ENCODE measurements at regions of chr5 and their contacts with region 1.

Region 1: GRCh38 chr5:41636605-41637004 is 126.2 kb upstream of the PLCXD3 start:
- DNase-seq: no peak
- CTCF ChIP-seq: no peak

Region 2: DNA sequence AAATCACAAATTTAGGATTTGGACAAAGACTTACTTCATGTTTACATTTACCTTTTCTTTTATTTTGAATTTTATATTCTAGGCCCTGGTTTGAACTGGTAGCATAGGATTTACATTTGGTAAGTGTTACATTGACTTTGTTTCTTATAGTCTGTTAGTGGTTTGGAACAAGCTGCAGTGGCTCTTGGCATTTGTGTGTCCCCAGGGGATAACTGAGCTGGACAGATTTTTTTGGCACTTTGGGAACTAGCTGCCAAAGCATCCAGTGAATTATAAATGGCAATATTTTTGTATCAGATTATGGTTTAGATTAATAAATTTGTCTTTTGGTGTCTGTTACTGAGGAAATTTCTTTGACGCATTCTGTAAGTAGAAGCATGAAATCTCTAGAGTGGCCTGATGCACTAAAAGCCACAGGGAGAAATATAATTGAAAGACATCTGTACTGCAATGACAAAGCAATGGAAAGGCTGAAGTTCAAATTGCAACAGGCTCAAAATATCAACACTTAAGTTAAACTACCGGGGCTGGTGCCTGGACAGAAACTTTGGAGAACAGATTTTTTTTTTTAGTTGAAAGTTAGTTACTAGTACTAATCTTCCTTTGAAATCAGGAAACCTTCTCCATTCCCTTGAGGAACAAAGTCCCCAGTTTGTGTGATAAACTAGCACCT is 18.6 kb before region 1 on chr5:
- CTCF ChIA-PET with region 1: interaction called, 11 read pairs
- POLR2A ChIA-PET with region 1: no interaction called
- DNase-seq: no peak
- CTCF ChIP-seq: no peak

Region 3: GRCh38 chr5:41808294-41808693 is 171.7 kb after region 1 on chr5:
- CTCF ChIA-PET with region 1: no interaction called
- POLR2A ChIA-PET with region 1: no interaction called
- DNase-seq: no peak
- CTCF ChIP-seq: no peak